ENCODE measurements at regions of chr17 and their contacts with region 1.

Region 1: DNA sequence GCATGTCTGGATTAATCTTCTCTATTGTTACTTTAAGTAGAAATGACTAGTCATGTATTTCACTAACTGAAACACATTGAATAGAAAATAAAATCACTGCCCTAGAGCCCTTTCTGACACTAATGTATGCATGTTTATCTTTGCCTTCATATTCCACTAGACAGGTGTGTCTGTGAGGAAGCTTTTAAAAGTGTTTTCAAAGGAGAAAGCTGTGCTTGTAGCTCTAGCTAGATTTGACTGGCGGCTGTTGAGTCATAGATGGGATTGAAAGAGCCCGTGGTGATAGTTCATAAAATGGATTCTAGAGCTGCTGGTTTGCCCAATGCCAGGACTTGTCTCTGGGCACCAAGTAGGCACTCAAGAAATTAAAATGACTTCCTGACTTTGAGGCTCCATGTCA is 189.0 kb upstream of the PIRT start:
- DNase-seq: no peak
- H3K4me3 ChIP-seq: no peak overlapping the region
- H3K27ac ChIP-seq: no peak overlapping the region
- H3K4me1 ChIP-seq: no peaks in the 10 kb centered on the region
- H3K27me3 ChIP-seq: no peaks in the 10 kb centered on the region
- CTCF ChIP-seq: no peak
- POLR2A ChIP-seq: no peak

Region 2: GRCh38 chr17:9284884-9285283 is 1742.0 kb before region 1 on chr17:
- intact Hi-C with region 1: no loop called
- DNase-seq: no peak
- H3K4me3 ChIP-seq: no peak overlapping the region
- H3K27ac ChIP-seq: no peak overlapping the region
- H3K4me1 ChIP-seq: no peaks in the 10 kb centered on the region
- H3K27me3 ChIP-seq: no peaks in the 10 kb centered on the region
- CTCF ChIP-seq: no peak
- POLR2A ChIP-seq: no peak

Region 3: GRCh38 chr17:11081342-11081741 is 54.4 kb after region 1 on chr17:
- intact Hi-C with region 1: no loop called
- DNase-seq: no peak
- H3K4me3 ChIP-seq: no peak overlapping the region
- H3K27ac ChIP-seq: no peak overlapping the region
- H3K4me1 ChIP-seq: no peaks in the 10 kb centered on the region
- H3K27me3 ChIP-seq: peaks cover 0 to 4% of the 10 kb centered on the region in 2 donors
- CTCF ChIP-seq: no peak
- POLR2A ChIP-seq: no peak

Region 4: GRCh38 chr17:11340798-11341197 is 313.9 kb after region 1 on chr17:
- intact Hi-C with region 1: loop called (anchors 2 kb)
- DNase-seq: no peak
- H3K4me3 ChIP-seq: no peak overlapping the region
- H3K27ac ChIP-seq: no peak overlapping the region
- H3K4me1 ChIP-seq: no peaks in the 10 kb centered on the region
- H3K27me3 ChIP-seq: no peaks in the 10 kb centered on the region
- CTCF ChIP-seq: no peak
- POLR2A ChIP-seq: no peak